OCI-LY7 (cell line): ENCODE measurements at regions of chr12 and their contacts with region 1.

Region 1: DNA sequence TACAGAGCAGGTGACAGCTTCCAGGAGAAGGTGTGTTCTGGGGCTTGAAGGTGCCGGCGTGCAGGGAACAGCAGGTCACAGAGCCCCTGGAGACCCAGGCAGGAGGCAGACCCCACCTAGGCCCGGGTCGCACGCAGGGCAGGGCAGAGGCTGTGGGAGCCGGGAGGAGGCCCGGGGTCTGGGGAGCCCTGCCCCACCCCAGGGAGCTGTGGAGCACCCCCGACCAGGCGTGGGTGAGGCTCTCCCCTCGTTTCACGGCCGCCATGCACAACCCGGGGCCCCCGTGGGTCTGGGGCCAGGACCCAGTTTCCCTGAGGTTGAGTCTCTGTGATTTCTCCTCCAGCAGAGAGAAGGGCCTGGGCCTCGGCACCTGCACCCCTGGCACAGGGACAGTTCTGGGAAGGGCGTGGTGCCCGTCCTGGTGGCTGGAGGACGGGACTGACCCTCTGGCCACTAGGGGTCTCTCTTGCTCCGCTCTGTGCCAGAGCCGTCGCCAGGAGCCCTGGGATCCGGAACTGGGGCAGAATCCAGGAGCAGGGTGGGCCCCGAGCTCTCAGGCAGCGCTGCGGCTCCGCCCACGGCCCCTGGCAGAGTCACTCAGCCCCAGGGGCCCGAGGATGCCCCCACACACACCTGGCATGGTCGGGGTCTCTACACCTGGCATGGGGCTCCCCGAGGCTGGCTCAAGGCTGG is 75.2 kb upstream of the FBRSL1 start:
- DNase-seq: peak; percentile 82
- H3K4me3 ChIP-seq: no peak overlapping the region
- H3K27ac ChIP-seq: no peak overlapping the region
- H3K4me1 ChIP-seq: no peaks in the 10 kb centered on the region
- CTCF ChIP-seq: peak; percentile 88

Region 2: GRCh38 chr12:132153501-132154340 is 261.1 kb before region 1 on chr12:
- CTCF ChIA-PET with region 1: interaction called, 5 read pairs
- POLR2A ChIA-PET with region 1: no interaction called
- intact Hi-C with region 1: loop called (anchors 2 kb)
- DNase-seq: peak; percentile 76
- H3K4me3 ChIP-seq: no peak overlapping the region
- H3K27ac ChIP-seq: no peak overlapping the region
- H3K4me1 ChIP-seq: no peaks in the 10 kb centered on the region
- CTCF ChIP-seq: peak; percentile 86

Region 3: DNA sequence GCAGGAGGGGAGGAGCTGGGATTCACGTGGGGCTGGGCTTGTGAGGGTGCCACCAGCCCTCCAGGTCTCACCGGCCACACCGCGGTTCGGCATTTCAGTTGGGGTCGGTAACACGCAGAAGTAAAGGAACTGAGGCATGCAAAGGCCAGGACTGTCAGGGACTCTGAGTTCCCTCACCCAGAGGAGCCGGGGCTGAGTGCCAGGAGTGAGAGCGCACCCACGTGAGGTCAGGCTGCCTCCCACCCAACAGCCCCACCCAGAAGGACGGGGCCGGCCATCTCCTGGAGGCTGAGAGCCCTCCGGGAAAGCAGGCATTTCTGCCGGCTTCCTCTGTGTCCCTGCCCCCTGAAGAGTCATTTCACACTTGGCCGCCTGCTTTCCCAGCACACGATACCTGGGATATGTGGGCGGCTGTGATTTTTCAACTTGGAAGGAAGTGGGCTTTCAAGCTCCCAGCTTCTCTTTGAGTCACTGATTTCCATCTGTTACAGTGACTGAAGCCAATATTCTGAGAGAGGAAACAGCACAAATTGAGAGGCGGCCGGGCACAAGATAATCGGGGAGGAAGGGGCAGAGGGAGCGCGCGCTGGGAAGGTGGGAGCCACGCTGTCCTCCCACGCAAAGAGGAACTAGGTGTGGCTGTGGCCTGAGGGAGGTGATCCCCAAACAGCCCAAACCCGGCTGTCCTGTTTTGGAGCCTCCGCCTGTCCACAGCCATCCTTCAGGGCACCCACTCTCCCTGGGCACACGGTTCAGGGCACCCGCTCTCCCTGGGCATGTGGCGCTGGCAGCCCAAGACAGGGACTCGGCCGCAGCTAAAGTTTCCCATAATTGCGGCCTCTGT is 104.4 kb before region 1 on chr12:
- CTCF ChIA-PET with region 1: no interaction called
- POLR2A ChIA-PET with region 1: no interaction called
- intact Hi-C with region 1: no loop called
- DNase-seq: no peak
- H3K4me3 ChIP-seq: no peak overlapping the region
- H3K27ac ChIP-seq: no peak overlapping the region
- H3K4me1 ChIP-seq: no peaks in the 10 kb centered on the region
- CTCF ChIP-seq: no peak

Region 4: GRCh38 chr12:132393991-132394949 is 20.5 kb before region 1 on chr12:
- CTCF ChIA-PET with region 1: no interaction called
- POLR2A ChIA-PET with region 1: no interaction called
- intact Hi-C with region 1: no loop called
- DNase-seq: no peak
- H3K4me3 ChIP-seq: no peak overlapping the region
- H3K27ac ChIP-seq: no peak overlapping the region
- H3K4me1 ChIP-seq: no peaks in the 10 kb centered on the region
- CTCF ChIP-seq: no peak

Region 5: DNA sequence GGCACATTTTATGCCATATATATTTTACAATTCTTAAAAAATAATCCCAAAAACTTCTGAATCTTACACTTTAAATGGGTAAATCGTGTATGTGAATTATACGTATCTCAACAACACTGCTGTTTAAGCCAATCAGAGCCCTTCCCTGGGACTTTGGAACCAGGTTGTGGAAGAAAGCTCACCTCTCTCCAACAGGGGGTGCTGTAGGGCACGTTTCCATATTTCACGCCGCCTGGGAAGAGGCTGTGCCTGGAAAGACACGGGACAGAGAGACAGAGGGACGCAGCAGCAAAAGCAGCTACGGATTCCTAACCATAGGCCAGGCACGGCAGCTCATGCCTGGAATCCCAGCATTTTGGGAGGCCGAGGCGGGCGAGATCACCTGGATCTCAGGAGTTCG is 45.8 kb after region 1 on chr12:
- CTCF ChIA-PET with region 1: no interaction called
- POLR2A ChIA-PET with region 1: no interaction called
- intact Hi-C with region 1: no loop called
- DNase-seq: no peak
- H3K4me3 ChIP-seq: no peak overlapping the region
- H3K27ac ChIP-seq: no peak overlapping the region
- H3K4me1 ChIP-seq: no peaks in the 10 kb centered on the region
- CTCF ChIP-seq: peak; percentile 67

Region 6: DNA sequence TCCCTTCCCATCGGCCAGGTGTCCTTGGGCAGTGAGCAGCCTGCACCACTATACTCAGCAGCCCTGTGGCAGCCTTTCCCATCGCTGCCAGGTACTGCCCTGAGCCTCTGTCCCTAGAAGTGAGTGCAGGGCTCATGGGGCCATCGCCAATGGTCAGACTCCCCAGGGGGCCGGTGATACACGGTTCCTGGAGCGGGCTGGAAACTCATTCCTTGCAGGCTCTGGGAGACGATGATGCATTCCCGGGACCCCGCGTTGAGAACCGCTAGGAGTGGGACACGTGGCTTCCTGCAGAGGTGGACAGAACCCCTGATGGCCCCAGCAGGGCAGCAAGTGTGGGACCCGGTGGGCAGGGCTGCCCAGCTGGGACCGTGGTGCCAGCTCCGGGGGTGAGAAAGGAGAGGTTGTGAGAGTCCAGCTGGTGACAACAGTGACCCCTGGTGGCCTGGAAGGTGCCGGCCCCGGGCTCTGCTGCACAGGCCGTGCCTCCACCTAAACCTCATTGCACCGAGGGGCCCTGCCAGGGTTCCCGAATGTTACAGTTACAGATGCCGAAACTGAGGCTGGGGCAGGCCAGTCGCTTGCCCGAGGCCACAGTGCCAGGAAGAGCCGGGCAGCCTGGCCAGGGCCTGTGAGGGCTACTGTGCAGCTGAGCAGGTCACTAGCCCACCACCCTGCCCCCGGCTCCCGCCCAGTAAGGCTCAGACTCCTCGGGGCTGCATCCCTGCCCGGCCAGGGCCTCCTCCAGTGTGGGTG is 109.0 kb after region 1 on chr12:
- CTCF ChIA-PET with region 1: interaction called, 3 read pairs
- POLR2A ChIA-PET with region 1: no interaction called
- intact Hi-C with region 1: loop called (anchors 1 kb)
- DNase-seq: peak; percentile 59
- H3K4me3 ChIP-seq: no peak overlapping the region
- H3K27ac ChIP-seq: no peak overlapping the region
- H3K4me1 ChIP-seq: no peaks in the 10 kb centered on the region
- CTCF ChIP-seq: peak; percentile 85